A673 (cell line): ENCODE measurements at regions of chr13 and their contacts with region 1.

Region 1: DNA sequence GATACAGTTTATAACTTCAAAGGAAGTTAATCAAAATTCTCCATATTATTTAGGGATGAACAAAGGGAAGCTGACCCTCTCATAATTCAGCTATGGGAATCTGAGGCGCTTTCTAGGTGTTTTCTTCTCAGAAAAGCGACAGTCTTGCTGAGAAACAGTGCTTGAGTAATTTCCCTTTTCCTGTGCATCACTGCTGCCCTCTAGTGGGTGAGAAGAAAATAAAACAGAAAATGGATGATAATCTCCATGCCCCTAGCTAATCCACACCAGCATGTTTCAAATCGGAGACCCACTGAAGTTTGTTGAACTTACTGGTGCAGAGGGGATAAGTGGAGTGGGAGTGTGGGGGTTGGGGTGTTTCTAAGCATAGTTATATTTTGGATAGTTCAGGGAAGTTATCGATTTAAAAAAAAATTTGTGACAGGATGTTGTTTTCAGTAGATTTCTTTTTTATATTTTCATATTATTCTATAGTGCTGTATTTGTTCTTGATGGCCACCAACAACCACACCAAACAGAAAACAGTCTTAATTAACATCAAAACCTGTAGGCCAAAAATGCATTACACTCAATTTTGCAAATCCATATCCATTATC is 21.4 kb downstream of the LCP1 start:
- DNase-seq: peak; percentile 91
- H3K4me3 ChIP-seq: no peak overlapping the region
- H3K27ac ChIP-seq: peak overlapping the region; percentile 16
- H3K4me1 ChIP-seq: peaks cover 13% of the 10 kb centered on the region
- H3K27me3 ChIP-seq: no peaks in the 10 kb centered on the region
- CTCF ChIP-seq: peak; percentile 77

Region 2: GRCh38 chr13:45370922-45371406 is 789.6 kb before region 1 on chr13:
- CTCF ChIA-PET with region 1: interaction called, 3 read pairs
- POLR2A ChIA-PET with region 1: no interaction called
- intact Hi-C with region 1: loop called (anchors 10 kb)
- DNase-seq: peak; percentile 82
- H3K4me3 ChIP-seq: no peak overlapping the region
- H3K27ac ChIP-seq: no peak overlapping the region
- H3K4me1 ChIP-seq: peaks cover 7% of the 10 kb centered on the region
- H3K27me3 ChIP-seq: no peaks in the 10 kb centered on the region
- CTCF ChIP-seq: peak; percentile 94

Region 3: DNA sequence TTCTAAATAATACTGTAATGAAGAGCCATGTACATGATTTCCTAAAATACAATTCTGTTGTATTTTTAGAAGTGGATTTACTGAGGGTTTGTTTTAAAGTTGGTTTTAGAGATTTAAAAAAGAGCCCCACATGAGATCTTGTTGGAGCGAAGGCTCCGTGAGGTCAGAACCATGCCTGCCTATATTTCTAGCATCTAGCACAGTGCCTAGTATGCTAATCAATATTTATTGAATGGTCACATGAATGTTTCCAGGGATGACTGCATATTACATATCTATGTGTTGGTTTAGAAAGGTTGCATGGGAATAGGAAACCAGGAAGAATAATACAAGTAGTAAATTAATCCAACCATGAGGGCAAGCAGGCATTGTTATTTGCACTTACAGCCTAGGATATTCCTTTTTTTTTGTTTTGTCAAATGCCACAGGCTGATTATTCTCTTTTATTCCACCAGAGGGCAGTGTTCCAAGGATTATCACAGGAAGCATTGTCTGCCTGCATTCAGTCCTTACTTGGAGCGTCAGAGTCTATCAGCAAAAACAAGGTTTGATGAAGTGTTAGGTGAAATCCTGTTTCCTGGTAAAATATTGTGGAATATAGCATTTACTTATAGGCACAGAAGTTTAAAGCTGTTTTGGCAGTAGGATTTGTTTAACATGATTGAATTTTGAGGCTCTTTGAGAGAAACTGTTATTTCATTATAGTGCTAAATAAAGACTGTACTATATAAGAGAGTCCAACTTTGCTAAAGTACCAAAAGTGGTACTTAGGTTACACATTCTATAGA is 649.1 kb before region 1 on chr13:
- CTCF ChIA-PET with region 1: no interaction called
- POLR2A ChIA-PET with region 1: no interaction called
- intact Hi-C with region 1: loop called (anchors 10 kb)
- DNase-seq: peak; percentile 87
- H3K4me3 ChIP-seq: no peak overlapping the region
- H3K27ac ChIP-seq: no peak overlapping the region
- H3K4me1 ChIP-seq: peaks cover 21% of the 10 kb centered on the region
- H3K27me3 ChIP-seq: no peaks in the 10 kb centered on the region
- CTCF ChIP-seq: peak; percentile 84

Region 4: DNA sequence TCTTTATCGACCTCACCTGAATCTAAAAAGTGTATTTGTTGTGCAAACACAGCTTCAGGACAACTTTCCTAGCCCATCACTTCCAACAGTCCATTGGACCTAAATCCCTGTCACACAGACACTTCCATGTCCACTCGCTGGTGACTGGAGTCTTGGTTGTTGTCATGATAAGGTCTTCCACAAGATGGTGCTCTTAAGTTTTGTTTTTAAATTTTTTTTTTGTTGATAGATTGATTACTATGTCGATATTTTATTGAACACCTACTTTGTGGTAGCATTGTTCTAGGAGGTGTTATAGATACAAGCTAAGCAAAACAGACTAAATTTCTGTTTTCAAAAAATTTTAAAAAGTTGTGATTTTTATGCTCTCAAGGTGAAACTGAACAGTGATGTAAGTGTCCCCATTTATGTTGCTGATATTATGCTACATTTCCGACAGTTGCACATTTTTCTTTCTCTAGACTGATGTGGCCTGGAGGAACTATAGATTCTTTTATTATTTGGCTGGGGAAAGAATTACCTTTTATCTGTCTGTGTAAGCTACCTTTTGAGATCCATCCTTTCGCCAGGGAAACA is 537.0 kb before region 1 on chr13:
- CTCF ChIA-PET with region 1: interaction called, 3 read pairs
- POLR2A ChIA-PET with region 1: no interaction called
- intact Hi-C with region 1: loop called (anchors 10 kb)
- DNase-seq: peak; percentile 57
- H3K4me3 ChIP-seq: no peak overlapping the region
- H3K27ac ChIP-seq: no peak overlapping the region
- H3K4me1 ChIP-seq: peaks cover 16% of the 10 kb centered on the region
- H3K27me3 ChIP-seq: no peaks in the 10 kb centered on the region
- CTCF ChIP-seq: peak; percentile 77

Region 5: DNA sequence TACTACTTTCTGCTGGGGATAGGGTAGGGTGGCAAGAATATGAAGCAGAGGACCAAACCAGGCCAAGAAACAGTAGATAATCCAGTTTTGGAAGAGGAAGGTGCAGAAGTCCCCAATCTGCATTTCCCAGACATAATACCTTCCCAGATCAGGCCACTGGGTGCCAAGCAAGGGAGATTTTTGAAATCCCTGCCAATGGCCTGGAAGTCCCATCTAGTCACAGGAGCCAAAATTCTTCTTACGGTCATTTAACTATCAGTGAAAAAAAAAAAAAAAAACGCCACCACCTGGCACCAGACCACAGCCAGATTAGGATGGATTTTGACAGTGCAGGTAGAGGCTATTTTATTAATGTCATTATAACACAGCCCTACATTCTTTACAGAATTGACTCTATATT is 165.8 kb before region 1 on chr13:
- CTCF ChIA-PET with region 1: interaction called, 12 read pairs
- POLR2A ChIA-PET with region 1: no interaction called
- intact Hi-C with region 1: no loop called
- DNase-seq: no peak
- H3K4me3 ChIP-seq: no peak overlapping the region
- H3K27ac ChIP-seq: no peak overlapping the region
- H3K4me1 ChIP-seq: peaks cover 43% of the 10 kb centered on the region
- H3K27me3 ChIP-seq: no peaks in the 10 kb centered on the region
- CTCF ChIP-seq: no peak